Pancreas (tissue), 10 donors: ENCODE measurements at regions of chr5 and their contacts with region 1.

Region 1: GRCh38 chr5:160021831-160022446 is 13.0 kb downstream of the TTC1 start:
- DNase-seq: peak in 3 of 6 donors; percentile 45 to 70 (median 54)
- ATAC-seq: peak; percentile 87 to 99 (median 96)
- H3K4me3 ChIP-seq: no peak overlapping the region
- H3K27ac ChIP-seq: peak overlapping the region in 1 of 4 donors; percentile 53
- H3K4me1 ChIP-seq: peaks cover 0 to 14% (median 11%) of the 10 kb centered on the region in 3 donors
- H3K27me3 ChIP-seq: no peaks in the 10 kb centered on the region
- CTCF ChIP-seq: peak; percentile 47 to 74 (median 60)

Region 2: GRCh38 chr5:160183075-160183474 is 161.1 kb after region 1 on chr5:
- intact Hi-C with region 1: no loop called
- DNase-seq: no peak
- ATAC-seq: no peak
- H3K4me3 ChIP-seq: no peak overlapping the region
- H3K27ac ChIP-seq: no peak overlapping the region
- H3K4me1 ChIP-seq: no peaks in the 10 kb centered on the region
- H3K27me3 ChIP-seq: no peaks in the 10 kb centered on the region
- CTCF ChIP-seq: no peak

Region 3: DNA sequence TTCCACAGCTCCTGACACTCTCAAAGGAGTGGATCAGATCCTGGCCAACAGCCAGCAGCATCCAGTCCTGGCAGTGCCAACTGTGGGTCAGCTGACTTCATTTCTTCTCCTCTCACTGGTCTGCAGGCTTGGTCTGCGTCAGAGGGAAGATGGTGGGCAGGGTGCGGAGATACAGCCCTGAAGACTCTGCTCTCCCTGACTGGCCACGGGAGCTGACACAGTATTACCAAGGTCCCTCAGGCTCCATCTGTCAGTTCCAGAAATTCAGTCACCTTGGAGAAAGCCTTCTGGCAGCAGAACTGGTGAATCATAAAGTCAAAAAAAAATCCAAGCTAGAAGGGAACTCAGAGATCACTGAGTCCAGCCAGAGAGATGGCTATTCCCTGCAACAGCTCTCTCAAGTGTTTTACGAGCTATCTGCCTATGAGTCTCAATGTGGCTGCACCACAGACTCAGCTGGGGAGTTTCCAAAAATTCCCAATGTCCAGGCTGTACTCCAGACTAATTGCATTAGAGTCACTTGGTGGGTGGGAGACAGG is 320.5 kb after region 1 on chr5:
- intact Hi-C with region 1: loop called in 2 of 3 experiments (anchors 5 to 10 kb)
- DNase-seq: no peak
- ATAC-seq: no peak
- H3K4me3 ChIP-seq: no peak overlapping the region
- H3K27ac ChIP-seq: no peak overlapping the region
- H3K4me1 ChIP-seq: peaks cover 0 to 7% (median 0%) of the 10 kb centered on the region in 3 donors
- H3K27me3 ChIP-seq: no peaks in the 10 kb centered on the region
- CTCF ChIP-seq: no peak